ENCODE measurements at regions of chr12 and their contacts with region 1.

Region 1: GRCh38 chr12:94710933-94711332 is 60.6 kb upstream of the TMCC3 start:
- DNase-seq: peak; percentile 57
- H3K4me3 Mint-ChIP-seq: no peak overlapping the region
- H3K27ac Mint-ChIP-seq: no peak overlapping the region
- H3K4me1 Mint-ChIP-seq: peaks cover 4% of the 10 kb centered on the region
- H3K27me3 Mint-ChIP-seq: no peaks in the 10 kb centered on the region

Region 2: DNA sequence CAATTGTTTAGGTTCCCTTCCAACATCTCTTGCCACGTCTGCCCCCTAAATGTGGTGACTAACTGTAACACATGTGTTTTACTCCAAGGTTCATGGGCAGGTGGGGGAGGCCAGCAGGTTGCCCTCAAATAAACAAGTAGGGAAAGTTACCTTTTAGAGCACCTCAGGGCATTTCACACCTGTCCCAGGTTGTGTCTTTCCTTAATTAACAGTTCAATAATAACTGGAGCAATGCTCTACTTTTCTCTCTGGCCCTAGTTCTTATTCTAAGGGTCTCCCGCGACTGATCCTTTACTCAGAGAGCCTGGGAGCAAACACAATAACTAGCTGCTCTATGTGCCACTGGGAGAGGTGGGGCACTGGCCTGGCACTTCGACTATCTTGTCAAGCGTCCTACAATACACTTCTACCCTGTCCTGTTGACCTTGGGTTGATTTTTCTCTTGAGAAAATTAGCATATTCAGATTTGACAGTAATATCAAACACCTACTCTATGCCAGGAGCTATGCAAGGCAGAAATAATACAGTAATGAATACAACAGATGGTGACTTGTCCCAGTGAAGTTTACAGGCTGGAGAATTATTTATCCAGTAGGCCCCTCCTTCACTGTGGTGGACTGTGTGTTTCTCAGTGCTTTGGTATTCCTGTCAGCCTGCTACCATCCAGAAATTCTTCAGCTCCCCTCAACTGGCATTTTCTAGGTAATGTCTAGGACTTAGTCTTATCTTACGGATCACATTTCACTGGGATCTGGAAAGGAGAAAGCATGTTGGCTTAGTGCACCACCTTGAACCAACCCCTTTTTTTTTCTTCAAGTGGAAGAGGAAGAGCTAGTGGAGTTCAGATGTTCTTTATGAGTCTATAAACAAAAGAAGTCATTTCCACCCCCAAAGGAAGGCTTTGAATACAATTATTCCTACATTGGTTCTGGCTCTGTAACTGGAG is 831.2 kb before region 1 on chr12:
- CTCF ChIA-PET with region 1: no interaction called
- intact Hi-C with region 1: no loop called
- DNase-seq: no peak
- H3K4me3 Mint-ChIP-seq: no peak overlapping the region
- H3K27ac Mint-ChIP-seq: no peak overlapping the region
- H3K4me1 Mint-ChIP-seq: peaks cover 15% of the 10 kb centered on the region
- H3K27me3 Mint-ChIP-seq: no peaks in the 10 kb centered on the region

Region 3: GRCh38 chr12:94536040-94536965 is 174.6 kb before region 1 on chr12:
- CTCF ChIA-PET with region 1: no interaction called
- intact Hi-C with region 1: no loop called
- DNase-seq: no peak
- H3K4me3 Mint-ChIP-seq: no peak overlapping the region
- H3K27ac Mint-ChIP-seq: no peak overlapping the region
- H3K4me1 Mint-ChIP-seq: no peaks in the 10 kb centered on the region
- H3K27me3 Mint-ChIP-seq: no peaks in the 10 kb centered on the region

Region 4: GRCh38 chr12:94621664-94622359 is 89.1 kb before region 1 on chr12:
- CTCF ChIA-PET with region 1: no interaction called
- intact Hi-C with region 1: loop called (anchors 1 kb)
- DNase-seq: peak; percentile 66
- H3K4me3 Mint-ChIP-seq: no peak overlapping the region
- H3K27ac Mint-ChIP-seq: no peak overlapping the region
- H3K4me1 Mint-ChIP-seq: peaks cover 20% of the 10 kb centered on the region
- H3K27me3 Mint-ChIP-seq: no peaks in the 10 kb centered on the region

Region 5: GRCh38 chr12:94689002-94689645 is 21.8 kb before region 1 on chr12:
- CTCF ChIA-PET with region 1: no interaction called
- intact Hi-C with region 1: loop called (anchors 1 kb)
- DNase-seq: no peak
- H3K4me3 Mint-ChIP-seq: no peak overlapping the region
- H3K27ac Mint-ChIP-seq: no peak overlapping the region
- H3K4me1 Mint-ChIP-seq: peaks cover 6% of the 10 kb centered on the region
- H3K27me3 Mint-ChIP-seq: no peaks in the 10 kb centered on the region

Region 6: DNA sequence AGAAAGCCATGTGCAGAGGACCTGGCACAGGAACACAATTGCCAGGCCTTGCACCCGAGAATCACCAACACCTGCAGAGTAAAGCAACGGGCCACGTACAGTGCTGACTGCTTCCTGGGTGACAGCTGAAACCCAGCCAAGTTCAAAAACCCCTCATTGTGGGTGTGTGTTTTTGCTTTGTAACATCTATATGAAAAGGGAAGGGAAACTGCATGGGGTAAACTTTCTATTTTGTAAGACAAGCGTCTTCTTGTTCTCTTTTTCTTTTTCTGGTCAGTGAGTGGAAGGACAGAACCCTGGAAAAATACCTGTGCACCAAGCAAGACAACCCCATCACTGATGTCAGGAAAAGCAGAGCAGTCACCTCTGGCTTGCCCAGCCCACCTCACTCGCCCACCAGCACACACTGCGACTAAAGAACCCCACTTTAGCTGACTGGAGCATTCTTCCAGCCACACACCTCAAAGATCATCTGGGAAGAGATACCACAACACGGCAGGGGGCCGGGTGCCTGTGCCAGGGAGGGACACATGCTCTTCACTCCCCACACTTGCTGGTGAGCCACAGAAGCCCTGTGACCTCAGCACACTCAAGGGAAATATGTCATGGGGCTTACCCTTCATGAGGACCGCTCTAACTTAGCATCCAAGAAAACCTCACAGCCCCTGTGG is 120.3 kb after region 1 on chr12:
- CTCF ChIA-PET with region 1: no interaction called
- intact Hi-C with region 1: loop called (anchors 1 kb)
- DNase-seq: peak; percentile 68
- H3K4me3 Mint-ChIP-seq: no peak overlapping the region
- H3K27ac Mint-ChIP-seq: peak overlapping the region; percentile 72
- H3K4me1 Mint-ChIP-seq: peaks cover 23% of the 10 kb centered on the region
- H3K27me3 Mint-ChIP-seq: no peaks in the 10 kb centered on the region